ENCODE measurements at regions of chr7 and their contacts with region 1.

Region 1: DNA sequence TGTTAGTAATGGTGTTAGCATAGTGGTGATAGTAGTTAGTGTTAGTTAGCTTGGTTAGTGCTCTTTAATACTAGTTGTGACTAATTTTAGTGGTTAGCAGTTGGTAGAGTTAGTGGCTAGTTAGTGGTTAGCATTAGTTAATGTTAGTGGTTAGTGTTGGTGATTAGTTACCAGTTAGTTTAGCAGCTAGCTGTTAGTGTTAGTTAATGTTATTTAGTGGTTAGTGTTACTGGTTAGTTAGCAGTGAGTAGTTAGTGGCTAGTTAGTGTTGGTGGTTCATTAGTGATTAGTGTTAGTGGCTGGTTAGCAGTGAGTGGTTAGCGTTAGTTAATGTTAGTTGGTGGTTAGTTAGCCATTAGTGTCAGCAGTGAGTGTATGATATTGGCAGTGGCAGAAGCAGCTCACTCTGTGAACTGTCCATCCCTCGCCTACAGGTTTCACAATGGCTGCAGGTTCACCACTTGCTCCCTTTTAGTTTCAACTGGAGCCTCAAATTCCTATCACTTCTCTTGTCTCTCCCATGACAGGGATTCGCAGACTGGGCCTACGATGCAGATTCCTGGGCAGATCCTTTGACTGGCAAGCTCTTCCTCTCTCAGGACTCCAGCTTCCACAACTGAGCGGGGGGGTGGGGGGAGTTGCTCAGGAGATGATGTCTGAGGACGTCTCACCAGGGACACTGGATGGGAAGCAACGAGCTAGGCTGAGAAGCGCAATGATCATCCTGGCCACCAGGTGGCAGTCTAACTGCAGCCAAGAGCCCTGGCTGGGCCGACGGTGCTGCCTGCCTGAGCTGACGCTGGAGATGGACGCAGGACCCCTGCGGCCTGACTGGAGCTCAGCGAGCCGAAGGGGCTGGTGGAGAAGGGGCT is 19.5 kb downstream of the GHRHR start:
- DNase-seq: peak; percentile 67 to 81
- H3K4me3 ChIP-seq: no peak overlapping the region
- H3K27ac ChIP-seq: no peak overlapping the region
- H3K4me1 ChIP-seq: peaks cover 3% of the 10 kb centered on the region
- H3K27me3 ChIP-seq: peaks cover 38% of the 10 kb centered on the region
- CTCF ChIP-seq: peak; percentile 98

Region 2: DNA sequence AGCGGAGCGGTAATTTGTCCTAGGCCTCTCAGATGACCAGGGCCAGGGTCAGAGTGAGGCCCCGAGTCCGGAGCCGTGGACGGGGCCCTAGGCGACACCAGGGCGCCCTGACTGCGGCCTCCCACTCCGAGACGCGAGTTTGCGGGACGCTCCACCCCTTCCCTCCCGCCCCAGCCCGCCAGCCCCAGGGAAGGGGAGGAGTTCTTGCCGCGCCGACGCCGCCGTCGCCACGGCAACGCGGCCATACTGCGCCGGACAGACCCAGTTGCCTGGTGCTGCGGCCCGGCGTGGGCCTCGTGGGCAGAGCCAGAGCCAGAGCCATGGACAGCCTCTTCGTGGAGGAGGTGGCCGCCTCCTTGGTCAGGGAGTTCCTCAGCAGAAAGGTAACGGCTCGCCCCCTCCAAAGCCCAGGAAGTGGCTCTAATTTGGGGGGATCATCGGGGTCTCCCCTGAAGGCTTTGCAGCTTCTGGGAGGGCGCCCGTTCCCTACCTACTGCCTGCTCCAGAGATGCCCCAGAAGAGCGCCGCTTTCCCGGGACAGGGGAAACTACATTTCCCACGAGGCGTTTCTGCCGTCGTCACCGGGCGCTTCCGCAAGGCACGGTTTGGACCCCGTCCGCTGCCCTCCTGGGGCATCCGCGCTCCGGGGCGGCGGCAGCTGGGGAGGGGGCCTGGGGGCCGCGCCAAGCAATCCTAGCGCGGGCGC is 212.0 kb before region 1 on chr7 and contains the start of gene MINDY4:
- CTCF ChIA-PET with region 1: no interaction called
- POLR2A ChIA-PET with region 1: no interaction called
- intact Hi-C with region 1: no loop called
- DNase-seq: peak; percentile 65 to 88
- H3K4me3 ChIP-seq: peak within 1 kb of the TSS; percentile 91
- H3K27ac ChIP-seq: no peak within 1 kb of the TSS
- H3K4me1 ChIP-seq: peaks cover 25% of the 10 kb centered on the region
- H3K27me3 ChIP-seq: no peaks in the 10 kb centered on the region
- CTCF ChIP-seq: no peak; the same call in 1 of the 2 replicates
- total RNA-seq, gene MINDY4: 11.5 and 14.8 TPM in 2 replicates

Region 3: DNA sequence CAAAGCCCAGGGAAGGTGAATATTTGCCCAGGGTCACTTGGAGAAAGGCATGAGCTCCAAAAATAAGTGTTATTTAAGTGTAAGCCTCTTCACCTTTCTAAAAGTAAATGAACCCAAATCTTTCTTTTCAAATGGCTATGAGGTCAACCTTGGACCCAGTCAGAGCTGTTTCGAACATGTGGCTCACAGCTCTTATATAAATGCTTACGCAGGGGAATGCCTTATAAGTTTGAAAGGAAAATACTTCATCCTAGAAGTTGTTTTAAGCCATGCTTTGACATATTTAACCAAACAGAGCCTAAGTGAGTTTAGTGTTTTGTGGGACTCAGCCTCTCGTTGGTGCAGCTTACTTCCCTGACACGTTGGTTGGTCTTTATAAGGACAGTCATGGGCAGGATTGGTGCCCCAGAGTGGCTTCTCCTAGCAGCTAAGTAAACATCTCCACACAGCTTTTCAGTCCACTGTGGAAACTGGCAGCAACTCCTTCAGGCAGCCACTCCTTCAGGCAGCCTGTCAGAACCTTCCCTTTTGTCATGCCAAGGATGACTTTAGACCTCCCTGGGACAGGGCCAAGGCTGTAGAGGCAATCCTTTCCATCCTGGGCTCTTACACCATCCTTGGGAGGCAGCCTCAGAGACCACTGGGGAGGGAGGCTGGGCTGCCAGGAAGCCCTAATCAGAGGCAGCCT is 168.4 kb before region 1 on chr7:
- CTCF ChIA-PET with region 1: interaction called, 24 read pairs
- POLR2A ChIA-PET with region 1: no interaction called
- intact Hi-C with region 1: no loop called
- DNase-seq: no peak
- H3K4me3 ChIP-seq: no peak overlapping the region
- H3K27ac ChIP-seq: no peak overlapping the region
- H3K4me1 ChIP-seq: peaks cover 10% of the 10 kb centered on the region
- H3K27me3 ChIP-seq: no peaks in the 10 kb centered on the region
- CTCF ChIP-seq: no peak

Region 4: DNA sequence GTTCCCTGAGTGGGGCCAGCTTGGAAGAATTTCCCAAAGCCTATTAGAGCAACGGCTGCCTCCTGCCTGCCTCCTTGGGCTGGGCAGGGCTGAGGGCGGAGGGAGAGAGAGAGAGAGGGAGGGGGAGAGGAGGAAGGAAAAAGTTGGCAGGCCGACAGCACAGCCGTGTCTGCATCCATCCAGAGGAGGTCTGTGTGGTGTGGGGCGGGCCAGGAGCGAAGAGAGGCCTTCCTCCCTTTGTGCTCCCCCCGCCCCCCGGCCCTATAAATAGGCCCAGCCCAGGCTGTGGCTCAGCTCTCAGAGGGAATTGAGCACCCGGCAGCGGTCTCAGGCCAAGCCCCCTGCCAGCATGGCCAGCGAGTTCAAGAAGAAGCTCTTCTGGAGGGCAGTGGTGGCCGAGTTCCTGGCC is 71.7 kb before region 1 on chr7 and contains the start of gene AQP1:
- CTCF ChIA-PET with region 1: no interaction called
- POLR2A ChIA-PET with region 1: no interaction called
- intact Hi-C with region 1: no loop called
- DNase-seq: no peak
- H3K4me3 ChIP-seq: no peak within 1 kb of the TSS
- H3K27ac ChIP-seq: no peak within 1 kb of the TSS
- H3K4me1 ChIP-seq: peaks cover 34% of the 10 kb centered on the region
- H3K27me3 ChIP-seq: no peaks in the 10 kb centered on the region
- CTCF ChIP-seq: no peak
- total RNA-seq, gene AQP1: 4.0 and 4.8 TPM in 2 replicates

Region 5: DNA sequence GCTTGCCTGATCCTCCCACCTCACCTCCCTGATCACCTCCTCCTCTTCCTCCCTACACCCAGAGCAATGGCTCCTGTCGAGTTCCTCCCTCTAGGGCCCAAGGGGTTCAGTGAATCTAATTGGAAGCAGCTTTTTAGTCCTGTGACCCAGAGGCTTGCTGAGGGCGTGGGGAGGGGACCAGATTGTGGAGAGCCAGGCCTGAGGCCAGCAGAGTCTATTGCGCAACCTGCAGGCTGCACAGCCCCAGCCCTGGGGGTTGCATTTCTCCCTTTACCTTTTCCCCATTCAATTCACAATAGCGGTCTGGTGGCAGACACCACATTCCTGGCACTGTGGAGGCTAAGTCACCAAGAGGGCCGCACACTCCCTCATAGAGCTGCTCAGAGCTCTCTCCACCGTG is 13.0 kb after region 1 on chr7:
- CTCF ChIA-PET with region 1: interaction called, 12 read pairs
- POLR2A ChIA-PET with region 1: no interaction called
- intact Hi-C with region 1: no loop called
- DNase-seq: no peak
- H3K4me3 ChIP-seq: no peak overlapping the region
- H3K27ac ChIP-seq: no peak overlapping the region
- H3K4me1 ChIP-seq: no peaks in the 10 kb centered on the region
- H3K27me3 ChIP-seq: peaks cover 36% of the 10 kb centered on the region
- CTCF ChIP-seq: no peak

Region 6: GRCh38 chr7:31488562-31489203 is 505.4 kb after region 1 on chr7:
- CTCF ChIA-PET with region 1: no interaction called
- POLR2A ChIA-PET with region 1: no interaction called
- intact Hi-C with region 1: loop called (anchors 5 kb)
- DNase-seq: peak in 1 of 2 experiments; percentile 59
- H3K4me3 ChIP-seq: no peak overlapping the region
- H3K27ac ChIP-seq: no peak overlapping the region
- H3K4me1 ChIP-seq: no peaks in the 10 kb centered on the region
- H3K27me3 ChIP-seq: peaks cover 15% of the 10 kb centered on the region
- CTCF ChIP-seq: peak; percentile 91

Region 7: GRCh38 chr7:31735991-31736982 is 753.0 kb after region 1 on chr7:
- CTCF ChIA-PET with region 1: no interaction called
- POLR2A ChIA-PET with region 1: no interaction called
- intact Hi-C with region 1: loop called (anchors 1 kb)
- DNase-seq: peak; percentile 42 to 51
- H3K4me3 ChIP-seq: no peak overlapping the region
- H3K27ac ChIP-seq: no peak overlapping the region
- H3K4me1 ChIP-seq: no peaks in the 10 kb centered on the region
- H3K27me3 ChIP-seq: peaks cover 44% of the 10 kb centered on the region
- CTCF ChIP-seq: peak; percentile 95

Measured in PC-9 (cell line).